ENCODE measurements at regions of chr3 and their contacts with region 1.

Region 1: DNA sequence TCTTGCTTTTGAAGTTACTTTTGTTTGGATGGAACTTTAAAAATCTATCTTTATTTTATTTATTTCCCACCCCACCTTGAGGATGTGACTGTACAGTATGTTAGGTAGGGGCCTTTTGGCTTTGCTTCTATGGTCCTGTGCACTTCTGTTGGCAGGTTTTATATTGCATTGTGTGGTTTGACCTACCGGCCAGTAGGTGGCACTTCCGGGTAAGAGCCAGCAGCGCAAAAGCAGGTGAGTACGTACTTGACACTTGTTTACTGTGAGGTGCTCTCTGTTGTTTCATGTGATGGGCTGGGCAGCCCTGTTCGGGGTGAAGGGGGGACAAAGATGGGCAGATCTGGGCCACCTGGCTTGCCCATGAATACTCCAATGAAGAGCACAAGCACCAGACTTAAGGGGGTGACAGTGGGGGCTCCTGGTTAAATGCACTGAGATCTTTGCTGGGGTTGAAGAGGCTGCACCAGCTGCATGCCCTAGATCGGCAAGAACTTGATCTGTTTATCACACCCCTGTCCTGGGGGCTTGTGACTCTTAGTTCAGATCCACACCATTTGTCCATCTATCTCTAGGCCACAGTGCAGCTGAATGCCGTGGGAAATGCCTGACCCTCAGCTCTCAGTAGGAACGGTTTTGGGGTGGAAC is 131.6 kb downstream of the NLGN1 start:
- DNase-seq: peak; percentile 54
- H3K4me3 Mint-ChIP-seq: no peak overlapping the region
- H3K27ac Mint-ChIP-seq: no peak overlapping the region
- H3K4me1 Mint-ChIP-seq: no peaks in the 10 kb centered on the region
- H3K27me3 Mint-ChIP-seq: peaks cover 91% of the 10 kb centered on the region
- CTCF ChIP-seq: peak; percentile 56

Region 2: GRCh38 chr3:173513123-173513522 is 16.1 kb before region 1 on chr3:
- CTCF ChIA-PET with region 1: interaction called, 10 read pairs
- POLR2A ChIA-PET with region 1: interaction called, 3 read pairs
- intact Hi-C with region 1: no loop called
- DNase-seq: peak; percentile 41
- H3K4me3 Mint-ChIP-seq: no peak overlapping the region
- H3K27ac Mint-ChIP-seq: no peak overlapping the region
- H3K4me1 Mint-ChIP-seq: no peaks in the 10 kb centered on the region
- H3K27me3 Mint-ChIP-seq: peaks cover 40% of the 10 kb centered on the region
- CTCF ChIP-seq: no peak